ENCODE measurements at regions of chr1 and their contacts with region 1.

Region 1: DNA sequence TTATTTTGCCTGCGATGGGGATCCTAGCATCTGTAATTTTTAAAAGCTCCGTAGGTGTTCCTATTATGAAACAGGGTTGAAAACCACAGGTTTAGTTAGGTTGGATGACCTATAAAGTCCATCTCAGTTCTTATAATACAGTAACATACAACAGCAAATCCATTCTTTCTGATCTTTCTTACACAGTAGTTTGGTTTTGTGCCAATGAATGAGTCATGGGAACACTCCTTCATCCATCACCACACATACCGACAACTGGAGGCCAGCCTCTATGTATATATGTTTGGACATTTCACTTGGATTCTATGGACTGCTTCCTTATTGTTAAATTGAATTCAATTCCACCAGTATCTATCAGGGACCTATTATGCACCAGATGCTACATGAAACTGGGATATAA is 118.4 kb upstream of the L1TD1 start:
- DNase-seq: no peak
- ATAC-seq: peak in 1 of 8 donors; percentile 41
- H3K4me3 ChIP-seq: no peak overlapping the region
- H3K27ac ChIP-seq: no peak overlapping the region
- H3K4me1 ChIP-seq: no peaks in the 10 kb centered on the region
- H3K27me3 ChIP-seq: no peaks in the 10 kb centered on the region
- CTCF ChIP-seq: no peak

Region 2: GRCh38 chr1:62144238-62144831 is 68.0 kb after region 1 on chr1:
- intact Hi-C with region 1: loop called in 2 of 10 experiments (anchors 5 to 10 kb)
- DNase-seq: peak in 1 of 2 donors; percentile 25
- ATAC-seq: peak in 2 of 8 donors; percentile 10 to 33
- H3K4me3 ChIP-seq: no peak overlapping the region
- H3K27ac ChIP-seq: no peak overlapping the region
- H3K4me1 ChIP-seq: peaks cover 0 to 20% (median 5%) of the 10 kb centered on the region in 9 donors
- H3K27me3 ChIP-seq: no peaks in the 10 kb centered on the region
- CTCF ChIP-seq: peak; percentile 39 to 84 (median 71)

Measured in heart right ventricle (tissue), 16 donors.